ENCODE measurements at regions of chr1 and their contacts with region 1.

Region 1: GRCh38 chr1:84753516-84754385 is 63.5 kb upstream of the SSX2IP start:
- DNase-seq: peak; percentile 78
- CTCF ChIP-seq: peak; percentile 95

Region 2: GRCh38 chr1:84433258-84434080 is 320.3 kb before region 1 on chr1:
- CTCF ChIA-PET with region 1: interaction called, 20 read pairs
- POLR2A ChIA-PET with region 1: no interaction called
- DNase-seq: peak; percentile 49
- CTCF ChIP-seq: peak; percentile 70

Region 3: DNA sequence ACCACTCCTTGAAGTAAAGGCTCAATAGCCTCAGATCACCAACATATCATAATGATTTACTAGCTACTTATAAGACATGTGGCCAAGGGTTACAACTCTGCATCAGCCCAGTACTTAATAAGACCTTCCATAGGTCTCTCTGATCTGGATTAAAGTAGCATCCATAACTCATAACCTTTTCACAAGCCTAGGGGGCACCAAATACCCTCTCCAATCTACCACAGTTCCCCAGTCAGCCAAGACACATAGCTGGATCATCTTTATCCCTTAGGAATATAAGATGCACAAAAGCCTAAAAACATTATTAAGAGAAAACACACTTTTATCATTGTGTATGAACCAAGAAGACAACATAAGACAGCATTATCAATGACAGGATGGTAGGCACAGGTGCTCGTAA is 85.6 kb before region 1 on chr1:
- CTCF ChIA-PET with region 1: interaction called, 10 read pairs
- POLR2A ChIA-PET with region 1: no interaction called
- DNase-seq: no peak
- CTCF ChIP-seq: no peak

Region 4: DNA sequence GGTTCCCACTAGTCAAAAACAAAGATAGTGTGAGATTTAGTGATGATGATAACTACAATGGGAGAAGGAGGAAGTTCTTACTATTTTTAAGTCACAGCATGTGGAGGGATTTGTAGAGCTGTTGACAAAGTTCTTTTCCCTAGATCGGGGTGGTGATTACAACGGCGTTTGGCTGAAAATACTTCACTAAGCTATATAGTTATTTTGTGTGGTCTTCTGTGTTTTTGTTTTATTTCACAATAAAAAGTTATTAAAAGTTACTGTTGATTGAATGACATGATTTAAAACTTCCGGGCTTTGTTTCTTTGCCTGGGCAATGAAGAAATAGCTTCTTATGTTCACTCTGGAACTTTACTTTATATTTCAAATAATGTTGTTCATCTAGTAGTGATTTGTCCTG is 16.2 kb before region 1 on chr1:
- CTCF ChIA-PET with region 1: interaction called, 14 read pairs
- POLR2A ChIA-PET with region 1: no interaction called
- DNase-seq: no peak
- CTCF ChIP-seq: no peak

Region 5: DNA sequence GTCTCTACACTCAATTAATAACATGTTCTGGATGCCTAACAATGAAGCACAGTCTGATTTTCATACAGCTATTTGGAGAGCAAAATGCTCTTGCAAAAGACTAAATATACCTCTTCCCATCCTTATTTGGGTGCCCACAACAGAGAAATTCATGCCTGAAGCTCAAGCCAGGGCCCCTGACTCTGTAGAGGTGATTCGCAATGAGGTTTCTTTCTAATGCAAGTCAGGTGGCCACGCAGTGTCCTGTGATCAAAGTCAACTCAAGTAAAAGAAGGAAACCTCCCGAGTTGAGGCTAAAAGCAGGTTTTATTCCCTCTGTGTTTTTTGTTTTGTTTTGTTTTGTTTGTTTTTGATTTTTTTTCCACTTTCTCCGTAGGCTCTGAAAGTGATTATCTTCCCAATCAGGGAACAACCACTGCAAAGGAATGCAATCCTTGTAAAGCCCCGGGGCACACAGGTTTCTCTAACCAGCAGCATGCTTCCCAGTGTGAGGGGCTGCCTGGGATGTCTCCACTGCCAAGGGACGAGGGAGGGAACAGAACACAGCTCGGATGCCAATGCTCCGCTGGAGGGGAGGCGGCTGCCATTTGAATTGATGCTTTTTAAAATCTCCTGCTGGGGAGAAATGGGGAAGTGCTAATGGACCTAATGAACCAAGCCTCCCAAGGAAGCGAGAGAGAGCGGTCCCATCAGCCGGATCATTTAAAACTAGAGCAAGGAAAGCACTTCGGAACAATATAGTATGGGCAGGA is 10.3 kb after region 1 on chr1:
- CTCF ChIA-PET with region 1: interaction called, 16 read pairs
- POLR2A ChIA-PET with region 1: no interaction called
- DNase-seq: no peak
- CTCF ChIP-seq: no peak

Region 6: GRCh38 chr1:84781946-84782771 is 28.4 kb after region 1 on chr1:
- CTCF ChIA-PET with region 1: interaction called, 15 read pairs
- POLR2A ChIA-PET with region 1: no interaction called
- DNase-seq: peak; percentile 82
- CTCF ChIP-seq: peak; percentile 84

Measured in GM10248 (cell line).